ENCODE measurements at regions of chr2 and their contacts with region 1.

Region 1: GRCh38 chr2:190088917-190089316 is 26.4 kb upstream of the MSTN start:
- DNase-seq: peak; percentile 77
- H3K4me3 Mint-ChIP-seq: no peak overlapping the region
- H3K27ac Mint-ChIP-seq: no peak overlapping the region
- H3K4me1 Mint-ChIP-seq: no peaks in the 10 kb centered on the region
- H3K27me3 Mint-ChIP-seq: no peaks in the 10 kb centered on the region
- CTCF ChIP-seq: peak; percentile 66

Region 2: DNA sequence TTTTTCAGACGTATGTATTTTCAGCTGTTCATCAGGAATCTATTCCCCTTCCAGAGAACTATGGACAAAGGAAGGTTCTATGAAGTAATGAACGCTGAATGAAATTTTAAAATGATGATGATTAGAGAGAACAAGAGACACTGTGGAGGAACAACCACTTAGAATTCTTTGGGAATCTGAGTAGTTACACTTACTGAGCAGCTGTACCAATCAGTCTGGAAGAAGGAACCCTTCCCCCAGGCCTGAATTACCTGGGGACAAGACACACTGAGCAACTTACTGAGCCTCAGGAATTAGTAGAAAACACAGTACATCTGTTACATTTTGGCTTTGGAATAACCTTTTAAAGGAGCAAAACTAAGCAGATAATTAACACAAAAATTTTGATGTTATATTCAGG is 28.3 kb before region 1 on chr2:
- CTCF ChIA-PET with region 1: no interaction called
- POLR2A ChIA-PET with region 1: no interaction called
- intact Hi-C with region 1: no loop called
- DNase-seq: no peak
- H3K4me3 Mint-ChIP-seq: no peak overlapping the region
- H3K27ac Mint-ChIP-seq: no peak overlapping the region
- H3K4me1 Mint-ChIP-seq: no peaks in the 10 kb centered on the region
- H3K27me3 Mint-ChIP-seq: no peaks in the 10 kb centered on the region
- CTCF ChIP-seq: no peak

Region 3: DNA sequence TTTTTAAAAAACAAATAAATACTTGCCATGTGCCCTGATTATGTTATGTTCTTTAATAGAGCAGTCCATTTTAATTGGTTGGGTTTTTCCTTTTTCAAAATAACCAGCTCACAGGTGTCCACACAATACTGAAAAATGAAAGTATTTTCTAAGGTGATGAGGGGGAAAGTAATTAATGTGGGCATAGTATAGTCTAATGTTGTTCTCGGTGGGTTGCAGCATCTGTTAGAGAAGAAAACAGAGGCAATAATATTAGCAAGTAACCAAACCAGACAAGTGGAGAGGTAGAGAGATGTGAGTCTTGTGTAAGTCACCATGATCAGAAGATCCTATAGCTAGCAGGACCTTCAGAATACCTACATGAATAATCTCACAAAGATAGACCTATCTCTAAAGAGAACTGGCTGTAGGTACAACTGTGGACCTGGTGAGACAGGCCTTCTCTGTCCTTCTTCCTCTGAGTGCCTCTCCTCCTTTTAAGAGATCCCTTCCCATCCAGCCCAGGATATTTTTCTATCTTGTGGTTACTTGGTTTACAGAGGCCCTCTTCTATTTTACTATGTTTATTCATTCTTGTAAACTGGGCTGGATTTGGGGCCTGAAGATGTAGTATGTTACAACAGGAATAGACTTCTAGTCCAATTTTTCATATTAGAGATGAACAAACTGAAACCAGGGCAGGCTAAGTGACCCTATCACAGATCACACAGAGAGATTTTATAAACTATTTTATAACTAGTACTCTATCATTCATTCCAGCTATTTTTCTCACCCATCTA is 40.7 kb after region 1 on chr2:
- CTCF ChIA-PET with region 1: interaction called, 11 read pairs
- POLR2A ChIA-PET with region 1: no interaction called
- intact Hi-C with region 1: no loop called
- DNase-seq: no peak
- H3K4me3 Mint-ChIP-seq: no peak overlapping the region
- H3K27ac Mint-ChIP-seq: no peak overlapping the region
- H3K4me1 Mint-ChIP-seq: no peaks in the 10 kb centered on the region
- H3K27me3 Mint-ChIP-seq: no peaks in the 10 kb centered on the region
- CTCF ChIP-seq: no peak

Region 4: GRCh38 chr2:190277234-190278112 is 188.6 kb after region 1 on chr2:
- CTCF ChIA-PET with region 1: interaction called, 4 read pairs
- POLR2A ChIA-PET with region 1: interaction called, 4 read pairs
- intact Hi-C with region 1: loop called (anchors 1 kb)
- DNase-seq: peak; percentile 44
- H3K4me3 Mint-ChIP-seq: no peak overlapping the region
- H3K27ac Mint-ChIP-seq: no peak overlapping the region
- H3K4me1 Mint-ChIP-seq: peaks cover 10% of the 10 kb centered on the region
- H3K27me3 Mint-ChIP-seq: no peaks in the 10 kb centered on the region
- CTCF ChIP-seq: peak; percentile 55

Region 5: DNA sequence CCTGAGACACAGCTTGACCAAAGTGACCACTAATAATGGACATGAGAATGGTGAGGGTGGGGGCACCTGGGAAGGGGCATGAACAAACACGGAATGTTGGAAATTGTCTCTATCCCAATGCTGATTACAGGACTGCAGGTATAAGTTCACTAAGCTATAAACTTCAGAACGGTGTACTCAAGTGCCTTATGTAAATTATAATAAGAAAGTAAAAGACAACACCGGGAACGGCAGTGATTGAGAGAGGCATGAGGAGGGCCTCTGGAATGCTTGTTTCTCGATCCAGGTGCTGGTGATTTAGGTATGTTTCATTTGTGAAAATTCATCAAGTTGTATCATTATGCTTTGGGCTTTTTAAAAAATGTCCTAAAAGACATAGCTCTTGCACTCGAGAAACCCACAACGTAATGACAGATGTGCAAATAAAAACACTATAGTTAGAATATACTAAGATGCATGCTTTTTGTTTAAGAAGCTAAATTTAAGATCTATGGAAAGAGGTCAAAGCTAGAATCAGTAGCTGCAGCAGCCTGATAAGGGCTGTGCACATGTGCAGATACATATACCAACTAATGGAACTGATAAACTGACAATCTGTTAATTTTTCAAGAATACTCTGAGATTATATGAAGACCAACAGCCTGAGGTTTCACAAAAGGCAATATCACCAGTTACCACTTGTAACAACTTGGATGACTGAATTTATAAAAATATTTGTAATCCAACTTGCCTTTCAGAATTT is 223.1 kb after region 1 on chr2:
- CTCF ChIA-PET with region 1: interaction called, 29 read pairs
- POLR2A ChIA-PET with region 1: no interaction called
- intact Hi-C with region 1: no loop called
- DNase-seq: no peak
- H3K4me3 Mint-ChIP-seq: no peak overlapping the region
- H3K27ac Mint-ChIP-seq: no peak overlapping the region
- H3K4me1 Mint-ChIP-seq: peaks cover 21% of the 10 kb centered on the region
- H3K27me3 Mint-ChIP-seq: no peaks in the 10 kb centered on the region
- CTCF ChIP-seq: no peak

Region 6: GRCh38 chr2:190376591-190377245 is 287.8 kb after region 1 on chr2:
- CTCF ChIA-PET with region 1: interaction called, 8 read pairs
- POLR2A ChIA-PET with region 1: no interaction called
- intact Hi-C with region 1: loop called (anchors 1 kb)
- DNase-seq: no peak
- H3K4me3 Mint-ChIP-seq: no peak overlapping the region
- H3K27ac Mint-ChIP-seq: no peak overlapping the region
- H3K4me1 Mint-ChIP-seq: no peaks in the 10 kb centered on the region
- H3K27me3 Mint-ChIP-seq: no peaks in the 10 kb centered on the region
- CTCF ChIP-seq: no peak

Region 7: GRCh38 chr2:190511104-190511503 is 422.2 kb after region 1 on chr2:
- CTCF ChIA-PET with region 1: interaction called, 5 read pairs
- POLR2A ChIA-PET with region 1: no interaction called
- intact Hi-C with region 1: loop called (anchors 5 kb)
- DNase-seq: peak; percentile 39
- H3K4me3 Mint-ChIP-seq: no peak overlapping the region
- H3K27ac Mint-ChIP-seq: no peak overlapping the region
- H3K4me1 Mint-ChIP-seq: peaks cover 6% of the 10 kb centered on the region
- H3K27me3 Mint-ChIP-seq: no peaks in the 10 kb centered on the region
- CTCF ChIP-seq: peak; percentile 27

Region 8: DNA sequence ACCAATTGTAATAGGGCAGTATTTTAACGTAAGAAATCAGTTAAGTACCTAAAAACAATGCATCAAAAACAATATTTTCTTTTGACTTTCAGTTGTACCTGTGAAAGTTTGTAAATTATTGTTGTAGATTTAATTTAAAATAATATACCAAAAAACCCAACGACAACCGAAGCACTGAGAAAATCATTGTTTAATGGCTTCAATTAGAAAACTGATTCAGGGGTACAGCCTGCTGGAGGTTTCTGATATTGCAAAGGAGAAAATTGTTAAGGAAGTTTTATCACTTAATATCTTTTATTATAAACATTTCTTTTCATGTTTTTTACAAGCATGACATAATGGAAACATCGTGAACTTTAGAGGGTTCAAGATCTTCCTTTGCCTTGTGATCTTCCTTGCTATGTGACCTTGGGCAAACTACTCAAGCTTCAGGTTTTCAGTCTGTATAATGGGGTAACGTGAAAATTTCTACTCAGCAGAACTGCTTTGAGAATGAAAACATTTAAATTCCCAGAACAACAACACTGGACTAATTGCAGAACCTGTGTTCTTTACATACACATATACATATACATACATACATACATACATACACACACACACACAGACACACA is 715.4 kb after region 1 on chr2:
- CTCF ChIA-PET with region 1: no interaction called
- POLR2A ChIA-PET with region 1: no interaction called
- intact Hi-C with region 1: loop called (anchors 2 kb)
- DNase-seq: peak; percentile 34
- H3K4me3 Mint-ChIP-seq: no peak overlapping the region
- H3K27ac Mint-ChIP-seq: no peak overlapping the region
- H3K4me1 Mint-ChIP-seq: no peaks in the 10 kb centered on the region
- H3K27me3 Mint-ChIP-seq: no peaks in the 10 kb centered on the region
- CTCF ChIP-seq: peak; percentile 62